Activated CD4-positive, alpha-beta T cell treated with anti-CD3 and anti-CD28 coated beads, Interleukin-2, amount 10 ng/mL, durations not matched to agents 24 days and 14 days (primary cell): ENCODE measurements at regions of chr2 and their contacts with region 1.

Region 1: DNA sequence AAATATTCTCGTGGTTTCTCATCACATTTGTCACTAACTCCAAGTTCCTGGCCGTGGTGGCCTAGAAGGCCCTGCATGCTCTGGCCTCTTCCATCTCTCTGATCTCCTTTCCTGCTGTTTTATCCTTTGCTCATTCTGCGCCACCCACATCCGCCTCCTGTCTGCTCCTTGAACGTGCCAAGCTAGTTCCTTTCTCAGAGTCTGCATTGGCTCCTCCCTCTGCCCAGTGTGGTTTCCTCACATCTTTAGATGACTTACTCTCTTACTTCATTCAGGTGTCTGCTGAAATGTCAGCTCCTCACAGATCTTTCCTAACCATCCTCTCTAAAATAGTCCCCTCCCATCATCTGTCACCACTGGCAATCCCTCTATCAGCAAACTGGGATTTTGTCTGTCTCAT is 158.6 kb upstream of the RBMS1 start:
- DNase-seq: peak; percentile 89
- H3K4me3 Mint-ChIP-seq: peak overlapping the region; percentile 17
- H3K27ac Mint-ChIP-seq: peak overlapping the region; percentile 38
- H3K4me1 Mint-ChIP-seq: peaks cover 22% of the 10 kb centered on the region
- H3K27me3 Mint-ChIP-seq: peaks cover 16% of the 10 kb centered on the region

Region 2: GRCh38 chr2:160417745-160418397 is 234.4 kb before region 1 on chr2:
- intact Hi-C with region 1: loop called (anchors 5 kb)
- DNase-seq: no peak
- H3K4me3 Mint-ChIP-seq: peak overlapping the region; percentile 41
- H3K27ac Mint-ChIP-seq: peak overlapping the region; percentile 85
- H3K4me1 Mint-ChIP-seq: peaks cover 51% of the 10 kb centered on the region
- H3K27me3 Mint-ChIP-seq: no peaks in the 10 kb centered on the region

Region 3: DNA sequence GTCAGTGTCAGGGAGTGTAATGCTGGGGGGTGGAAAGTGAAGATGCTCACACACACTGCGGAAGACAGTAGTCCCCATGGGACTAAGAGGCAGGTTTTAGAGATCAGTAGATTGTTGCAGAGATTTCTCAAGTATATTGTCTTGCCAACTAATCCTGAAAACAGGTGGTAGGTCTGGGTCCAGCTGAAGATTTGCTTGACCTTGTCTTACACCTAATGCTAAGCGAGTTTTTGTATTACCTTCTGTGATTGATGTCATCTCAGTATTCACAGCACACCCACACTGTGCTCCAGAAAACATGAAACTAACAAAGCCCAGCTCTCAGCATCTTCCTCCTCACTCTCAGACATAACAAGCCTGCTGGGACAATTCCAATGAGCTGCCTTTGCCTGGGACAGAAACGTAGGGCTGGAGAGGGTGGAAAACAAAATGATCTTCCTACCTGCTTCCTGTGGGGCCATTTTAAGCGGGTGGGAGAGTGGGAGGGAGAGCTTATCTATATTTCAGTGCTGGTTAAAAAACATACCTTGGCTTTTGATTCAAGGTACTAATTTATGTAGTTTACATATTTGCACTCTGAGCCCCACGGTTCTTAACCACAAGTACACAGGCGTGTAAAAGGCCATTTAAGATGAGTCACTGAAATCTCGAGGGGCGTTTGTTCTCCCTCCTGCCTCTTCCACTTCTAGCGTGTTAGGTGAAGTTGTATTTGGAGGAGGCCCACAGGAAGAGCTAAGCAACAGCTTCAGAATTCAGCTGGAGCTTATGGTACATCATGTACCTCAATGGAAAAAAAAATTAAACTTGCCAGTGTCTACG is 135.5 kb before region 1 on chr2:
- intact Hi-C with region 1: loop called (anchors 5 kb)
- DNase-seq: peak; percentile 59
- H3K4me3 Mint-ChIP-seq: peak overlapping the region; percentile 42
- H3K27ac Mint-ChIP-seq: peak overlapping the region; percentile 84
- H3K4me1 Mint-ChIP-seq: peaks cover 29% of the 10 kb centered on the region
- H3K27me3 Mint-ChIP-seq: no peaks in the 10 kb centered on the region

Region 4: GRCh38 chr2:160666154-160667060 is 14.2 kb after region 1 on chr2:
- intact Hi-C with region 1: loop called (anchors 1 kb)
- DNase-seq: peak; percentile 67
- H3K4me3 Mint-ChIP-seq: peak overlapping the region; percentile 53
- H3K27ac Mint-ChIP-seq: peak overlapping the region; percentile 45
- H3K4me1 Mint-ChIP-seq: peaks cover 20% of the 10 kb centered on the region
- H3K27me3 Mint-ChIP-seq: no peaks in the 10 kb centered on the region

Region 5: DNA sequence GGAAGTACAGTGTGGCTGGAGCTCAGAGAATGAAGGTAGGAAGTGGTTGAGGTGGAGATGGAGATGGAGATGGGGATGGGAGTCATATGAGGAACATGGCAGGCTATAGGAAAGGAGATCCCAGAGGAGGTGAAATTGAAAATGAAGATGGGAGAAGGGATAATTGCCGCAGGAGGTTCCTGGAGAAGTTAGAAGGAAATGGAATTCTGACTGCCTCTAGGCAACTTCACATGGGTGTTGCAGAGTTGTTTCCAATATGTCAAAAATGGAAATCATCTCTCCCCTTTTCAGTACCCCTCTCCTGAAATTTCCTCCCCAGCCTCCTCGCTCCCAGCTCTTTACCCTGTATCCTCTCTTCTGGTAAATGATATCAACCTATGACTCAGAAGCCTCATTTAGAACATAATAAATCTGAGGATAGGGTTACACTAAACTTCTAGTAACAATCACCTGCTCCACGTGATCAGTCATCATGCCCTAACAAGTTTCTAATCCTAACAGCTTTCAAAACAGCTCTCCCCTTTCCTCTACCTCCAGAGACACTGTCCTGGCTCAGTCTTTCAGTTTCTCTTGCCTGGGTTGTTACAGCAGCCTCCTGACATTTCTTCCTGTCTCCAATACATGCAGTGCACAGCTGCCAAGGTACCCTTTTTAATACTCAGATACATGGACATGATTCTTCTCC is 43.3 kb after region 1 on chr2:
- intact Hi-C with region 1: loop called (anchors 5 kb)
- DNase-seq: no peak
- H3K4me3 Mint-ChIP-seq: no peak overlapping the region
- H3K27ac Mint-ChIP-seq: no peak overlapping the region
- H3K4me1 Mint-ChIP-seq: no peaks in the 10 kb centered on the region
- H3K27me3 Mint-ChIP-seq: peaks cover 5% of the 10 kb centered on the region